ENCODE measurements at regions of chr2 and their contacts with region 1.

Region 1: DNA sequence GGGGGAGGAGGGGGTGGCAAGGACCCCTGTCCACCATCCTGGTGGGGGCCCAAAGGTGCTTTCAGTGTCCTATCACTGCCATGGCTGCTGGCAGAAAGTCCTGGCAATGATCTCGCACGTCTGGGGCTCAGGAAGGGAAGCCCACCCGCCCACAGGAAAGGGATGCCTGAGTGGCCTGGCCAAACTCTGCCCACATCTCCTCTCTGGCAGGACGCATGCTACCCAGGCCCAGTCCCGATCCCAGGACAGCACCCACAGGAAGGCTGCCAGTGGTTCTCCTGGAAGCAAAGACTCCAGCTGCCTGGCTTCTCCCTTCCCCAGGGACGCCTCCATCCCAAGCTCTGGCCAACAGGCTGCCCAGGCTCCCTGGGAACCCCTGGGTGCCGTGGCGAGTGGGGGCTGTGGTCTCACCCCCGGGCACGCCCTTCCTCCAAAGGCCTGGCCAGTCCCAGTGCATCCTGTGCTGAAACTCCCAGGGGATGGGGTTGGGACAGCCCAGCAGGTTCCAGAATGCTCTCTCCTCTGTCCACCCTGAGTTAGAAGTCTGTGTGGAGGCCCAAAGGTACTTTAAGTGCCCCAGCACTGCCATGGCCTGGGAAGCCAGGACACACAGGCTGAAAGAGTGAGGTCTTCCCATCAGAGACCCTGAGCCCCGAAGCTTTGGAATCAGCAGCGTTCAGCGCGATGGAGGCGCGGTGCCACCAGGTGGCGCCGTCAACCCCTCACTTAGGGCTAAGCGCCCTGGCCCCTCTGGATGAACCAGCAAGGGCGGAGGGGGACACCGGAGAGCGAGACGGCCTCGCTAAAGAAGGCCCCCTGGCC is 29.8 kb upstream of the TAF1B start:
- DNase-seq: peak; percentile 34 to 79 (median 70)
- ATAC-seq: peak; percentile 89
- H3K4me3 ChIP-seq: no peak overlapping the region
- H3K4me3 Mint-ChIP-seq: no peak overlapping the region
- H3K27ac ChIP-seq: no peak overlapping the region
- H3K27ac Mint-ChIP-seq: no peak overlapping the region
- H3K4me1 ChIP-seq: peaks cover 4% of the 10 kb centered on the region
- H3K4me1 Mint-ChIP-seq: peaks cover 11% of the 10 kb centered on the region
- H3K27me3 ChIP-seq: no peaks in the 10 kb centered on the region
- H3K27me3 Mint-ChIP-seq: peaks cover 3% of the 10 kb centered on the region
- CTCF ChIP-seq: peak; percentile 85

Region 2: GRCh38 chr2:9142551-9143263 is 670.8 kb before region 1 on chr2:
- CTCF ChIA-PET with region 1: no interaction called
- POLR2A ChIA-PET with region 1: no interaction called
- intact Hi-C with region 1: loop called in 1 of 2 experiments (anchors 5 kb)
- DNase-seq: peak; percentile 57 to 88 (median 75)
- ATAC-seq: peak; percentile 95
- H3K4me3 ChIP-seq: peak overlapping the region in 1 of 2 experiments; percentile 8
- H3K4me3 Mint-ChIP-seq: peak overlapping the region; percentile 39
- H3K27ac ChIP-seq: no peak overlapping the region
- H3K27ac Mint-ChIP-seq: no peak overlapping the region
- H3K4me1 ChIP-seq: peaks cover 3% of the 10 kb centered on the region
- H3K4me1 Mint-ChIP-seq: peaks cover 6% of the 10 kb centered on the region
- H3K27me3 ChIP-seq: no peaks in the 10 kb centered on the region
- H3K27me3 Mint-ChIP-seq: peaks cover 21% of the 10 kb centered on the region
- CTCF ChIP-seq: peak; percentile 90

Region 3: DNA sequence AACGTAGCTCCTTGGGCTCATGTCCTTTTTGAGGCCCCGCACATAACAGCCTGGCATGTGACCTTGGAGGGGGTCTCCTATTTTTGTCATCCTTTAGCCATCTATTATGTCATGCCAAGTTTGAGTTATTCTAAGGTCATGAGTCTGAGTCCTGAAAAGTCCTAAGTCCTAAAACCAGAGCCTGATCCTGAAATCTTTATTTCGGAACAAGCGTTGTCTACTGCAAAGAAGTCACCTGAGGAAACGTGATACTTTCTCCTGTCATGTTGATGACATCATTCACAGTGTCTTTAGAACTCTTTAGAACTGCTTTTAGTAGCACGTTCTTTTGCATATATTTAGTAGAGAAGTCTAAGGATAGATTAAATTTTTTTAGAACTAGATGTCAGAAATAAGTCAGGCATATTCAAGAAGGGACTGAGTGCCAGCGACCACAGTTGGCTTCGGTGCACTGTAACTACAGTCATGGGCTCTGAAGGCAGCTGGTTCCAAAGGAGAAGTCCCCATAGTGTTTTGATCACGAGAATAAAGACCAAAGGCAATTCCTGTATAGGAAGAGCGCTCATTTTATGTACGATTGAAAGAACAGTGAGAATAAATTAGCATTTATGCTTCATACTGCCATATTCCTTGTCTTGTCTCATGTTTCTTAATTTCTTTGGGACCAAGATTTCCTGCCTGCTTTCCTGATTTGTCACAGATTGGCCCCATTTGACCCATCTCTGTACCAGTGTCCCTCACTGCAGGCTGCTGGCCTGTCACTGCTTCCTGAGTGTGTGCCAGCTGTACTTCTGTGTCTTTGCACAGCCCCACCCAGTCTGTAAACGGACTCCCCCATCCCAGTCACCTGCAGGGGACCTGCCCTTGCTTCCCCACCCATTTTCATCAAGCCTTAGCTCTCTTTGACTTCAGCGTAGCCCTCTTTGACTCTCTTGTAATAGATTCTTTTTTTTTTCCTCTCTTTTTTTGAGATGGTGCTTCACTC is 531.1 kb before region 1 on chr2:
- CTCF ChIA-PET with region 1: no interaction called
- POLR2A ChIA-PET with region 1: no interaction called
- intact Hi-C with region 1: no loop called
- DNase-seq: no peak
- ATAC-seq: no peak
- H3K4me3 ChIP-seq: no peak overlapping the region
- H3K4me3 Mint-ChIP-seq: no peak overlapping the region
- H3K27ac ChIP-seq: no peak overlapping the region
- H3K27ac Mint-ChIP-seq: no peak overlapping the region
- H3K4me1 ChIP-seq: no peaks in the 10 kb centered on the region
- H3K4me1 Mint-ChIP-seq: no peaks in the 10 kb centered on the region
- H3K27me3 ChIP-seq: no peaks in the 10 kb centered on the region
- H3K27me3 Mint-ChIP-seq: peaks cover 2% of the 10 kb centered on the region
- CTCF ChIP-seq: no peak

Region 4: DNA sequence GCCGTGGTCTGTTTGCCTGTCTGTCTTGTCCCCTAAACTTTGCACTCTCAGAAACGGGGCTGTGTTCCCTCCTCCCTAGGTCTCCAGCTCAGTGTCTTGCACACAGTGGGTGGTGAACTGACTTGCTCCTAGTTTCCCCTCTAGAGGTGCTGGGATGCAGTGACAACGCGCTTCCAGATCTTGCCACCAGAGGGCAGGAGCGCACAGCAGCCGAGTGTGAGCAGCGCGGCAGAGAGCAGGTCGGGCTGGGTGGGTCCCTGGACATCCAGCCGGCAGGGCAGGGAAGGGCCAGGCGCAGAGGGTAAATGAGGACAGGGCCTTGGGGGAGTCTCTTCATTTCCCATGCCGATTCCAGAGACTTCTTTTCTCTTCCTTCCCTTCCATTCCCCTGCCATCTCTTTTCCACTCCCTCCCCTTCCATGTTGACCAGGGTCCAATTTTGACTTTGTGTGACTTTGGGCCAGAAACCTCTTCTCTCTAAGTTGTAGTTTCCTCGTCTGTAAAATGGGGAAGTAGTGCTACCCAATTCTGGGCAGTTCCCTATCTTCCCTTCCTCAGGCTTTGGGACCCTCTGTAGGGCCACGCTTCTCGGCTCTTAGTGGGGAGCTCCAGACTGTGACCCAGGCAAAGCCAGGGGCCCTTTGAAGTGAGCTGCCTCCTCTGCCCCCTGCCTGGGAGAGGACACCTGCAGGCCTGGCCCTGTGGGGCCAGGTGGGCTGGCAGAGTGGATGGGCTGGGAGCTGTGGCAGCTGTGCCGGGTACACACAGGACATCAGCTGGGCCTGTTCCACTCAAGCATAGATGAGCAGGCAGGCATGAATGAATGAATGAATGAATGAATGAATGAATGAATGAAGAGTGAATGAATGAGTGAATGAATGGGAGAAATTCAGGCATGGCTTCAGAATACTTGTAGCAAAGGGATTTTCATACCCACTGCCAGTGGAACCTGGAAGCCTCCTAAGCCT is 13.6 kb before region 1 on chr2:
- CTCF ChIA-PET with region 1: interaction called, 93 read pairs
- POLR2A ChIA-PET with region 1: no interaction called
- intact Hi-C with region 1: no loop called
- DNase-seq: peak; percentile 70 to 88 (median 85)
- ATAC-seq: peak; percentile 83
- H3K4me3 ChIP-seq: peak overlapping the region in 1 of 2 experiments; percentile 37
- H3K4me3 Mint-ChIP-seq: peak overlapping the region; percentile 76
- H3K27ac ChIP-seq: peak overlapping the region in 1 of 2 experiments; percentile 48
- H3K27ac Mint-ChIP-seq: peak overlapping the region; percentile 4
- H3K4me1 ChIP-seq: peaks cover 14% of the 10 kb centered on the region
- H3K4me1 Mint-ChIP-seq: peaks cover 20% of the 10 kb centered on the region
- H3K27me3 ChIP-seq: no peaks in the 10 kb centered on the region
- H3K27me3 Mint-ChIP-seq: peaks cover 3% of the 10 kb centered on the region
- CTCF ChIP-seq: peak; percentile 97

Region 5: DNA sequence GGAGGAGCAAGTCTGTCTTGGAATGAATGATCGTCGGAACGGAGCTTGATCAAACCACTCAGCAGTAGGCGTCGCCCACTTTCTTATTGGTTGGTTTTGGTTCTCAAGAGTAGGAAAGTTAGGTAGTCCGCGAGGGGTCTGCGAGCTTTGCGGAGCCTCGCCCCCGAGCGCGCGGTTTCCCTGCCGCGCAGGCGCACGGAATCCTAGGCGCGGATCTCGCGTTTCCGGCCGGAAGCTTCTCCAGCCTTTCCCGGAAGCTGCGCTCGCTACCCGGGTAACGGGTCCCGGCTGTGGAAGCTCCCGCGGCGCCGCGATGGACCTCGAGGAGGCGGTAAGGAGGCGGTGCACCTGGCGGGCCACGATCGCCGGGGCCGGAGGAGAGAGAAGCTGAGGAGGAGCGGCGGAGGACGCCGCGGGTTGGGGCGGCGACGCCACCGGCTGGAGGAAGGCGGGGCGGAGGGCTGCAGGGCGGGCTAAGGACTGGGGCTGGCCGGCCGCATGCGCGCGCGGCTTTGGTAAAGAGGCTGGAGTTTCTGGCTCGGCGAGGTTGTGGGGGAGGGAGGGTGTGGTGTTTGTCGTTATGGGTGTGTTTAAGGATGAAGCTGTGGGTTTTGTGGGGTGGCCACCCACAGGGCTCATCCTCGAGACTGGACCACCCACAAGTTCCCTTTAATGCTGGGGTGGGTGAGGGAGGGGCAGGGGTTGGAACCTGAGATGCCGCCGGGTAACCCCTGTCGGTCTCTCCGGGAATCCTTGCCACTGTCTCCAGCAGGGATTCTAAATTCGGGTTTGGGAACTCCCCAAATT is 29.9 kb after region 1 on chr2 and contains the start of gene TAF1B:
- CTCF ChIA-PET with region 1: interaction called, 20 read pairs
- POLR2A ChIA-PET with region 1: interaction called, 3 read pairs
- intact Hi-C with region 1: loop called in 1 of 2 experiments (anchors 2 kb)
- DNase-seq: peak; percentile 53 to 93 (median 84)
- ATAC-seq: peak; percentile 84
- H3K4me3 ChIP-seq: peak within 1 kb of the TSS; percentile 71 to 74
- H3K4me3 Mint-ChIP-seq: peak within 1 kb of the TSS; percentile 93
- H3K27ac ChIP-seq: peak within 1 kb of the TSS; percentile 65 to 84
- H3K27ac Mint-ChIP-seq: peak within 1 kb of the TSS; percentile 90
- H3K4me1 ChIP-seq: peaks cover 20% of the 10 kb centered on the region
- H3K4me1 Mint-ChIP-seq: peaks cover 48% of the 10 kb centered on the region
- H3K27me3 ChIP-seq: no peaks in the 10 kb centered on the region
- H3K27me3 Mint-ChIP-seq: no peaks in the 10 kb centered on the region
- CTCF ChIP-seq: no peak
- total RNA-seq, gene TAF1B: 13.3 to 15.8 TPM

Region 6: DNA sequence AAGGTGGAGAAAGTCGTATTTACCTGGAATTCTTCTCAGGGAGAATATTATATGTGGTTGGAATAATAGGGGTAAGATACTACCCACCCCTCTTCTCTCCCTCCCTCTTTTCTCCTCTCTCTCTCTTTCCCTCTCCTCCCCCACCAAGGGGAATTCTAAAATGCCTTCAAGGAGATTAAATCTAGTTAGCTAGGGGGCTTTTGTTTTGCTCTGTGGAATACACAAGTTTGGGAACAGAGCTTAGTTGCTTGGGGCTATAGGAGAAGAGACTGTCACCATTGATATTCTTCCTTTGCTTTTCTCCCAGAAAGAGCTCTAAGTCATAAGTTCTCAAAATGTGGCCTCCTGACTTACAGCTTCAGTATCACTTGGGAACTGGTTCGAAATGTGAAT is 64.2 kb after region 1 on chr2:
- CTCF ChIA-PET with region 1: no interaction called
- POLR2A ChIA-PET with region 1: no interaction called
- intact Hi-C with region 1: no loop called
- DNase-seq: no peak
- ATAC-seq: no peak
- H3K4me3 ChIP-seq: no peak overlapping the region
- H3K4me3 Mint-ChIP-seq: no peak overlapping the region
- H3K27ac ChIP-seq: no peak overlapping the region
- H3K27ac Mint-ChIP-seq: no peak overlapping the region
- H3K4me1 ChIP-seq: no peaks in the 10 kb centered on the region
- H3K4me1 Mint-ChIP-seq: no peaks in the 10 kb centered on the region
- H3K27me3 ChIP-seq: no peaks in the 10 kb centered on the region
- H3K27me3 Mint-ChIP-seq: no peaks in the 10 kb centered on the region
- CTCF ChIP-seq: no peak

Region 7: DNA sequence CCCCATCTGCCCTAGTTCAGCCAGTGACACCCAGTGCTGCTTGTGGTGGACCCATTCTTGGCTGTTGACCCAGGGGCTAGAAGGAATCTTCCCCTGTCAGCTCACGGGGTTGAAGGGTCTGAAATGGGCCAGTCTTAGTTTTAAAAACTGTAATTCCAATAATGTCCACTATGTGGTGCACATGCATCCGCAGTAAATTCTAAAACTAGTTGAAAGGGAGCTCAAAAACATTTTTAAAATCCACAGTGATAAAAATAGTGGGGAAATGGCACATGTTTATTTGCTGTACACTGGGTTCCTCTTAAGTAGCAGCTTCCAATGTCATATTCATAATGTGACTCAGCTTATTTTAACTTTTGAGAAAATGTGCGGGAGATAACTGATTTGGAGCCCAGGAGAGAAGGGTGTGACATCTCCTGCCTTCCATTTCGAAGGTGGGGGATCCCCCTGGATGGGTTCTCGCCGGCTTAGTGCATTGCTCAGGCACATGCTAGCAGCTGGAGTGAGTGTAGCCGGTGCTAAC is 170.8 kb after region 1 on chr2:
- CTCF ChIA-PET with region 1: interaction called, 11 read pairs
- POLR2A ChIA-PET with region 1: no interaction called
- intact Hi-C with region 1: loop called (anchors 5 to 10 kb)
- DNase-seq: peak in 6 of 9 experiments; percentile 7 to 77 (median 21)
- ATAC-seq: peak; percentile 87
- H3K4me3 ChIP-seq: no peak overlapping the region
- H3K4me3 Mint-ChIP-seq: no peak overlapping the region
- H3K27ac ChIP-seq: no peak overlapping the region
- H3K27ac Mint-ChIP-seq: no peak overlapping the region
- H3K4me1 ChIP-seq: peaks cover 9% of the 10 kb centered on the region
- H3K4me1 Mint-ChIP-seq: peaks cover 11% of the 10 kb centered on the region
- H3K27me3 ChIP-seq: no peaks in the 10 kb centered on the region
- H3K27me3 Mint-ChIP-seq: peaks cover 4% of the 10 kb centered on the region
- CTCF ChIP-seq: peak; percentile 84

Region 8: DNA sequence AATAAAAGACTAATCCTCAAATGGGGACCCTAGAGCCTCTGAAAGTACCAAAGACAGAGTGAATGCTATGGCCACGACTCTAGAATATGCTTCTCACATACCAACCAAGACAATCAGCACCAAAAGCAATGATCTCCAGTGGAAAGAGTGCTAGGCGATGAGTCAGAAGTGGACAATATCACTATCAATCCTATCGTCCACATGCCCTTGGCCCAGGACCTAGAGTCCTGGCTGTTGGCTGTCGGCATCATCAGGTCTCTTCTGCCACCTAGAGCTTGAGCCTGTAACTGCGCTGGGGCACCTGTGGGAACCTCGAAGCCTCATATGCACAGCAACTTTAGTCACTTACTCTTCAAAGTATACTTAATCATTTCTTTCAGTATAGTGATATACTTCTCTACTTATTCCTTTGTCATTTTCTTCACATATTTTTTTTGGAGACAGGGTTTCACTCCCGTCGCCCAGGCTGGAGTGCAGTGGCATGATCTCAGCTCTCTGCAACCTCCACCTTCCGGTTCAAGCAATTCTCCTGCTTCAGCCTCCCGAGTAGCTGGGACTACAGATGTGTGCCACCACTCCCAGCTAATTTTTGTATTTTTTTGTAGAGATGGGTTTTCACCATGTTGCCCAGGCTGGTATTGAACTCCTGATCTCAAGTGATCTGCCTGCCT is 846.5 kb after region 1 on chr2:
- CTCF ChIA-PET with region 1: no interaction called
- POLR2A ChIA-PET with region 1: no interaction called
- intact Hi-C with region 1: loop called in 1 of 2 experiments (anchors 10 kb)
- DNase-seq: peak in 5 of 9 experiments; percentile 13 to 36 (median 33)
- ATAC-seq: peak; percentile 46
- H3K4me3 ChIP-seq: no peak overlapping the region
- H3K4me3 Mint-ChIP-seq: no peak overlapping the region
- H3K27ac ChIP-seq: no peak overlapping the region
- H3K27ac Mint-ChIP-seq: no peak overlapping the region
- H3K4me1 ChIP-seq: no peaks in the 10 kb centered on the region
- H3K4me1 Mint-ChIP-seq: peaks cover 8% of the 10 kb centered on the region
- H3K27me3 ChIP-seq: no peaks in the 10 kb centered on the region
- H3K27me3 Mint-ChIP-seq: no peaks in the 10 kb centered on the region
- CTCF ChIP-seq: peak; percentile 29